MCF 10A (cell line): ENCODE measurements at regions of chr11 and their contacts with region 1.

Region 1: GRCh38 chr11:2196970-2197770 is 25.6 kb upstream of the TH start:
- DNase-seq: peak; percentile 70
- H3K4me3 Mint-ChIP-seq: no peak overlapping the region
- H3K27ac Mint-ChIP-seq: no peak overlapping the region
- H3K4me1 Mint-ChIP-seq: peaks cover 26% of the 10 kb centered on the region
- H3K27me3 Mint-ChIP-seq: peaks cover 21% of the 10 kb centered on the region
- CTCF ChIP-seq: peak; percentile 94

Region 2: DNA sequence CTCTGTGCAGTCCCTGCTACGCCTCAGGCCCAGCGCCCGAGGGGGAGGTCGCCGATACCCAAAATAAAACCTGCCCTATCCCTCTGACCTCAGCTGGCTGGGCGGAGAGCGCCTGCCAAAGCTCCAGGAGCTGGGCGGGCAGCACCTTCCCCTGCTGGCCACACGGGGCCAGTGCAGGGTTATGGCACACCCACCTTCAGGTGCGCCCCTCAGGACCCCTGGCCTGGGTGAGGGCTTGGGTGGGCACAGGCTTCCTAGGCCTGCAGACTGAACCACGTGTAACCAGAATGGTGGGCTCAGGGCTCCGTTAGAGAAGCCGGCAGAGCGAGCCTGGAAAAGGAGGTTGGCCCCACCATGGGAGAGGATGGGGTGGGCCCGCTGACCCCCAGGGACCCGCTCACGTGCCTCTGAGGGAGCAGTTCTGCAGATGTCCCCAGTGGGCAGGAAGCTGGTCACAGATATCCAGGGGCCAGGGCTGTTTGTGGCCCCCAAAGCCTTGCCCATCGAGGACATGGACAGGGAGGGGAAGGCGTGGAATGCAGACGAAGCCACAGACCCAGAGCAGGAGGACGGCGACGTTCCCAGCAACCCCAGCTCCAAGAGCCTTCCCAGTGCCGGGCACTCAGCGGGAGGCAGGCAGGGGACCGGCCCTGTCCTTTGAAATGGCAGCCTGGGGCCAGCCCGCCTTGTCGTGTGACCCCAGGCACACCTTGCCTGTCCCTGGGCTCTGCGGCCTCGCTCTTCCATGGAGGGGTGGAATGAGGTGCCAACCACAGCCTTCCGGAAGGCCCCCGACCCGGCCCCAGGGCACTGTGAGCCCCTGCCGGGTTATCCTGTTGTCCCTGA is 279.3 kb before region 1 on chr11:
- CTCF ChIA-PET with region 1: no interaction called
- POLR2A ChIA-PET with region 1: no interaction called
- intact Hi-C with region 1: no loop called
- DNase-seq: no peak
- H3K4me3 Mint-ChIP-seq: no peak overlapping the region
- H3K27ac Mint-ChIP-seq: no peak overlapping the region
- H3K4me1 Mint-ChIP-seq: no peaks in the 10 kb centered on the region
- H3K27me3 Mint-ChIP-seq: peaks cover 25% of the 10 kb centered on the region
- CTCF ChIP-seq: peak; percentile 38

Region 3: GRCh38 chr11:1983601-1983961 is 213.6 kb before region 1 on chr11:
- CTCF ChIA-PET with region 1: no interaction called
- POLR2A ChIA-PET with region 1: no interaction called
- intact Hi-C with region 1: no loop called
- DNase-seq: no peak
- H3K4me3 Mint-ChIP-seq: no peak overlapping the region
- H3K27ac Mint-ChIP-seq: no peak overlapping the region
- H3K4me1 Mint-ChIP-seq: no peaks in the 10 kb centered on the region
- H3K27me3 Mint-ChIP-seq: no peaks in the 10 kb centered on the region
- CTCF ChIP-seq: no peak

Region 4: DNA sequence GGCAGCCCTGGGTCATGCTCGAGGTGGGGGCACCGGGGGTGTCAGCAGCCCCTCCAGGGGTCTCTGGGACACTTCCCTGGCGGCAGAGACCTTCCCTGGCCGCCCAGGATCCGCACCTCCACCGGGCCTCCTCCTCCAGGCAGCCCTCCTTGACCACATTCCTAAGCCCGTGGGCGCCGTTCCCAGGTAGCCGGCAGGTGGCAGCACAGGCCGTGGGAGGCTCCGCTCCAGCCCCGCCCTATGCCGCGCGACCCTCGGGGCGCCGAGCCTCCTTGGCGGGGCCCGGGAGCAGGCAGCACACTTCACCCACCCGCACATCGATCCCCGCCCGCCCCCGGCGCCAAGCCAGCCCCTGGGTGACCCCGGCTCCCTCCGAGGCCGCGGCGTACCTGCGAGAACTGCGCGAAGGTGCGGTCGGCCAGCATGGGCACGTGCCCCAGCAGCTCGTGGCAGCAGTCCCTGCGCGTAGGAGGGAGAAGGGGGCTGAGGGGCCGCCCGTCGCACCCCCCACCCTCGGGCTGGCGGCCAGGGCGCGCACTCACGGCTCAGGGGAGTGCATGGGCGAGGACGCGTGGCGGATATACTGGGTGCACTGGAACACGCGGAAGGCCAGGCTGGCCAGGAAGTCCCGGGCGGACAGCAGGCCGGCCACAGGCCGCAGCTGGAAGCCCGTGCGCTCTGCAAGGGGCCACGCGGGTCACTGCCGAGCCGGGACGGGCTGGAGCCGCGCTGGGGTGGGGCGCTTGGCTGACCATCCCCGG is 30.9 kb before region 1 on chr11:
- CTCF ChIA-PET with region 1: interaction called, 24 read pairs
- POLR2A ChIA-PET with region 1: interaction called, 3 read pairs
- intact Hi-C with region 1: loop called (anchors 1 kb)
- DNase-seq: peak; percentile 35
- H3K4me3 Mint-ChIP-seq: no peak overlapping the region
- H3K27ac Mint-ChIP-seq: no peak overlapping the region
- H3K4me1 Mint-ChIP-seq: no peaks in the 10 kb centered on the region
- H3K27me3 Mint-ChIP-seq: no peaks in the 10 kb centered on the region
- CTCF ChIP-seq: peak; percentile 69

Region 5: GRCh38 chr11:2173150-2173693 is 23.9 kb before region 1 on chr11:
- CTCF ChIA-PET with region 1: interaction called, 11 read pairs
- POLR2A ChIA-PET with region 1: interaction called, 6 read pairs
- intact Hi-C with region 1: no loop called
- DNase-seq: no peak
- H3K4me3 Mint-ChIP-seq: no peak overlapping the region
- H3K27ac Mint-ChIP-seq: no peak overlapping the region
- H3K4me1 Mint-ChIP-seq: peaks cover 21% of the 10 kb centered on the region
- H3K27me3 Mint-ChIP-seq: no peaks in the 10 kb centered on the region
- CTCF ChIP-seq: peak; percentile 42

Region 6: DNA sequence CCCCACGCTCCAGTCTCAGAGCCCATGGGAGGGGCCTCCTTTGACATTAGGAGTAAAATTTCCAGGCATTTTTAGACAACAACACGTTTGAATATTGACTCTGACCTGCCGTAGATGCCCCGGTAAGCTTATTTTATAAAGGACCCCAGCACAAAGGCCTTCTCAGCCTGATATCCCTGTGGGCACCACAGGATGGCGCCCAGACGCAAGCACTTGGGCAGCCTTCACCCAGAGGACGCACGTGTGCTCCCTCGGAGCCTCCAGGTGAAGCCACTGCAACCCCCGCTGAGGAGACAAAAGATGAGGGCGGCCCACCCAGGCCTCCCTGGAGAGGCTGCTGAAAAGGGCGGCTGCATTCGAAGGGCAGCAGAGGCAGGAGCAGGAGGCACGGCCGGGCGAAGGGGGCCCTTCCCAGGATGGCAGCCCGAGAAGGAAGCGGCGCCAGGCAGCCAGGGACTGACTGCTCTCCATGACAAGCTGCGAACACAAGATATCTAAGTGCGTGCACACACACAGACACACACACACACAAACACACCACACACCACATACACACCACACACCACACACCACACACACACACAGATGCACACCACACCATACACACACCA is 10.4 kb before region 1 on chr11:
- CTCF ChIA-PET with region 1: interaction called, 18 read pairs
- POLR2A ChIA-PET with region 1: no interaction called
- intact Hi-C with region 1: no loop called
- DNase-seq: peak; percentile 25
- H3K4me3 Mint-ChIP-seq: no peak overlapping the region
- H3K27ac Mint-ChIP-seq: no peak overlapping the region
- H3K4me1 Mint-ChIP-seq: peaks cover 21% of the 10 kb centered on the region
- H3K27me3 Mint-ChIP-seq: no peaks in the 10 kb centered on the region
- CTCF ChIP-seq: peak; percentile 36

Region 7: DNA sequence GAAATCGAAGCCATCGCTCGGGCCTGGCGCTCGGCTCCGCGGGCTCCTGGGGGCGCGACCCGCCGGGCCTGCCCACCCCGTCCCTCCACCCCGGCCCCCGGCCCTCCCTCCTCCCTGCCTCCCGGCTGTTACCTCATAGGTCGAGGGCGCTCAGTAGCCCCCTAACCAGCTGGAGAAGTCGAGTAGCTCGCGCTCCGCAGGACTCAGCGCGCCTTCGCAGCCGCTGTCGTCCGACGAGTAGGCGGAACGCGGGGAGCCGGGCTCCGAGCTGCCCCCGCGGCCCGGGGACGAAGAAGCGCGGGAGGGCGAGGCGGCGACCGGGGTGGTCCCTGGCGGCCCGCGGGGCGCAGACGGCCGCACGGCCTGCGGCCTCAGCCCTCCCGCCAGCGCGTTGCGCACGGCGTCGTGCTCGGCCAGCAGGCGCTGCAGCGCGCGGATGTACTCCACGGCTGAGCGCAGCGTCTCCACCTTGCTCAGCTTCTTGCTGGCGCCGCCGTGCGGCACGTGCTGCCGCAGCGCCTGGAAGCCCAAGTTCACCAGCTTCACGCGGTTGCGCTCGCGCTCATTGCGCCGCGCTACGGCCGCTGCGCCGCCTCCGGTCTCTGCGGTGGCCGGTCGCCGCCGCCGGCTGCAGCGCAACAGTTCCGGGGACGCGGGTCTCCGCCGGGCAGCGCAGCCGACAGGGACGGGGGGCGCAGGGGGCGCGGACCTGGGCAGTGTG is 72.6 kb after region 1 on chr11:
- CTCF ChIA-PET with region 1: no interaction called
- POLR2A ChIA-PET with region 1: no interaction called
- intact Hi-C with region 1: no loop called
- DNase-seq: no peak
- H3K4me3 Mint-ChIP-seq: peak overlapping the region; percentile 71
- H3K27ac Mint-ChIP-seq: no peak overlapping the region
- H3K4me1 Mint-ChIP-seq: no peaks in the 10 kb centered on the region
- H3K27me3 Mint-ChIP-seq: peaks cover 11% of the 10 kb centered on the region
- CTCF ChIP-seq: no peak

Region 8: DNA sequence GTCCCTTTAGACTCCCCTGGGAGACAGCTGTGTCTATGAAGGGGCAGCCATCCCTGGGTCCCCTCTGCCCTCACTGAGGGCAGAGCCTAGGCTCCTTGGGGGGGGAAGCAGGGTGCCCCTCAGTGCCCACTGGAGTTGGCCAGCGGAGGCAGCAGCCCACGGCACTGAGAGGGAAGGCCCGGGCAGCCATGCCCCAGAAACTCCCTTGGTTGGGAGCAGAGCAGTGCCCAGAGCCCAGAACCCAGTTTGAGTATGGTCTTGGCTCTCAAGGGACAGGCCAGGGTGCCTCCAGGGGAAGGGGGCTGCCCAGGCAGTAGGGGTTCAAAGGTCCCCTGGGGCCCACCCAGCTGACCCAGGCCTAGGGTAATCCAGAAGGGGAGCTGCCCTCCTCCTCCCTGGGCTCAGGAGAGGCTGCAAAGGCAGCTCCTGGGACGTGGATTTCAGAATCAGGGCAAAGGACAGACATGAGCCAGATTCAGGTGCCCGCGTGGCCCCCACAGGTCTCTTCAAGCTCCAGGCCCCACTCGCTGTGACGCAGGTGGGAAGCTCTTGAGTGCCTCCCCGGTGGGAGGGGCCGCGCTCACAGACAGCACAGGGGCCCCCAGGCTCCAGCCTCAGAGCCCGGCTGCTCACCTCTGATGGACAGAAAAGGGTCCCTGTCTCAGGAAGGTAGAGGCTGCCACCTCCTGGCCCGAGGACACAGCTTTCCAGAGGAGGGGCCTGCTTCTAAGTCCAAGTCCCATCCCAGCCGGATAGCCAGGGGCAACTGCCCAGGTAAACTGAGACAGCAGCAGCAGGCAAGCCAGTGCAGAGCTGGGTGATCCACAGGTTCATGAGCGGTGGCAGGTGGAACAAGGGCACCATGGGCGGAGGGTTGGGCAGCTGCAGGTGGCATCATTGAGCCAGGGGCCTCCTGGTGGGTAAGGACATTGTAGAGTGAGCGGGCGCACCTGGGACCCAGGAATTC is 101.9 kb after region 1 on chr11:
- CTCF ChIA-PET with region 1: interaction called, 67 read pairs
- POLR2A ChIA-PET with region 1: no interaction called
- intact Hi-C with region 1: loop called (anchors 1 kb)
- DNase-seq: peak; percentile 43
- H3K4me3 Mint-ChIP-seq: no peak overlapping the region
- H3K27ac Mint-ChIP-seq: no peak overlapping the region
- H3K4me1 Mint-ChIP-seq: no peaks in the 10 kb centered on the region
- H3K27me3 Mint-ChIP-seq: no peaks in the 10 kb centered on the region
- CTCF ChIP-seq: peak; percentile 38

Region 9: GRCh38 chr11:2305140-2305840 is 108.1 kb after region 1 on chr11:
- CTCF ChIA-PET with region 1: interaction called, 67 read pairs
- POLR2A ChIA-PET with region 1: no interaction called
- intact Hi-C with region 1: no loop called
- DNase-seq: peak; percentile 67
- H3K4me3 Mint-ChIP-seq: no peak overlapping the region
- H3K27ac Mint-ChIP-seq: no peak overlapping the region
- H3K4me1 Mint-ChIP-seq: peaks cover 7% of the 10 kb centered on the region
- H3K27me3 Mint-ChIP-seq: no peaks in the 10 kb centered on the region
- CTCF ChIP-seq: peak; percentile 77

Region 10: GRCh38 chr11:2342981-2343380 is 145.8 kb after region 1 on chr11:
- CTCF ChIA-PET with region 1: no interaction called
- POLR2A ChIA-PET with region 1: no interaction called
- intact Hi-C with region 1: no loop called
- DNase-seq: no peak
- H3K4me3 Mint-ChIP-seq: no peak overlapping the region
- H3K27ac Mint-ChIP-seq: no peak overlapping the region
- H3K4me1 Mint-ChIP-seq: no peaks in the 10 kb centered on the region
- H3K27me3 Mint-ChIP-seq: peaks cover 13% of the 10 kb centered on the region
- CTCF ChIP-seq: no peak